A549 (cell line): ENCODE measurements at regions of chr16 and their contacts with region 1.

Region 1: DNA sequence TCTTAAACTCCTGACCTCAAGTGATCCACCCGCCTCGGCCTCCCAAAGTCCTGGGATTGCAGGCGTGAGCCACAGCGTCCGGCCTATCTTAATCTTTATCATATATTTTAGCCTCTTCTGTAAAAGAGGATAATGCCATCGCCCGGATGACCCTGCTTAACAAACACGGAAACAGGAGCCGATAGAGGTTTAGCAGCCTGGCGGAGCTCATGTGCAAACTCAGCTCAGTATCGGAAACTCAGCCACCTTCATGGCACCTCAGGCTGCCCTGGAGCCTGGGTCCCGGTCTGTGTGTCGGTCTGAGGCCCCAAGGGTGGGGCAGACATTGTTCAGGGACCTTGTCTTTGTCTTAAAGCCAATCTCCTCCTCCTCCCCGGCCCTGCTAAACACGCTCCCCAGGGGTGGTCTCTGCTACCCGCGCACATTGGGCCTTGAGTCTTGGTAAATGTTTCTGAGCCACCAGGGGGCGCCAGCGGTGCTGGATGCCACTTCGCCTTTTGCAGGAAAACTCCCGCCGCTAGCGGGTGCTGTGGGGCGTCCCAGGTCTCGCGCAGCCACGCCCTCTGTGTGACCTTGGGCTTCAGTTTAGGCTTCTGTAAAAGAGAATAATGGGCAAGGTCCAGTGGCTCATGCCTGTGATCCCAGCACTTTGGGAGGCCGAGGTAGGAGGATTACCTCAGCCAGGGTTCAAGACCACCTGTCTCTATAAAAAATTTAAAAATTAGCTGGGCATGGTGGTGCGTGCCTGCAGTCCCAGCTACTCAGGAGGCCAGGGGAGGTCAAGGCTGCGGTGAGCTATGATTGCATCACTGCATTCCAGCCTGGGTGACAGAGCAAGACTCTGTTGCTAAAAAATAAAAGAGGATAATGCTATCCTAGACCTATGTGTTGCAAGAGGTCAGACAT is 2.7 kb downstream of the CETP start:
- DNase-seq: peak; percentile 73 to 85
- ATAC-seq: peak; percentile 57 to 87; a peak in 4 of 6 replicates
- H3K4me3 ChIP-seq: no peak overlapping the region
- H3K27ac ChIP-seq: peak overlapping the region in 1 of 2 experiments; percentile 22; a peak in 1 of 6 replicates
- H3K4me1 ChIP-seq: peaks cover 3% of the 10 kb centered on the region; the same call in 1 of the 3 replicates
- CTCF ChIP-seq: peak; percentile 89
- EP300 ChIP-seq: no peak
- POLR2A ChIP-seq: no peak
- RAD21 ChIP-seq: peak; percentile 70 to 82

Region 2: GRCh38 chr16:56950881-56951771 is 13.4 kb before region 1 on chr16:
- CTCF ChIA-PET with region 1: interaction called, 38 read pairs
- POLR2A ChIA-PET with region 1: no interaction called
- DNase-seq: peak; percentile 60 to 65
- ATAC-seq: peak; percentile 76 to 93
- H3K4me3 ChIP-seq: no peak overlapping the region
- H3K27ac ChIP-seq: no peak overlapping the region
- H3K4me1 ChIP-seq: no peaks in the 10 kb centered on the region
- CTCF ChIP-seq: peak; percentile 58
- EP300 ChIP-seq: no peak
- POLR2A ChIP-seq: no peak
- RAD21 ChIP-seq: peak; percentile 64 to 73

Region 3: DNA sequence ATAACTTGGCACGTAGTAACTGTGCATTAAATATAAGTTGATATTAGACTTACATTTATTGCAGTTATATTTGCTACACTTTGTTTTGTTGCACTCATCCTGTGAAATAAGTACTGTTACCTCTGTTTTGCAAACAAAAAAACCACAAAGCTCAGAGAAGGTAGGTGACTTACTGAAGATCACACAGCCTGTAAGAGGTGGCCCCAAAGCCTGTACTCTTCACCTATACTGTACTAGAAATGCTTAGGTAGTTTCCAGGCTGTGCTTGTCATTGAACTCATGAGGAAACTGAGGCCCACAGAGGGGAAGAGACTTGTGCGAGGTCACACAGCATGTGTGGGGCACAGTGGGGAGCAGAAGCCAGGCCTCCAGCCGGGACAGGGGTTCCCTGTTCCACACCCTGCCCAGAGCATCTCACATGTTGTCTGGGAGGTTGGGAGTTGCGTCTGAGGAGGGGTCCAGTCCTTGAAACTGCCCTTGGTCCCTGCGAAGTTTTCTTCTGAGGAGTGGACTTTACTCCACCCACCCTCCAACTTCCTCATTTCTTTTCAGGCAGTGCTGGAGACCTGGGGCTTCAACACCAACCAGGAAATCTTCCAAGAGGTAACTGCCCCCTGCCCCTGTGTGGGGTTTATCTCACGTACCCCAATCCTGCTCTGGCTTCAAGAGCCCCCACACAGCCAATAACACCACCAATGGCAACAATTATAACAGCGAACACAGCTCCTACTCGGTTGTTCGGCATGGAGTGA is 10.2 kb after region 1 on chr16:
- CTCF ChIA-PET with region 1: interaction called, 16 read pairs
- POLR2A ChIA-PET with region 1: no interaction called
- DNase-seq: no peak
- ATAC-seq: no peak
- H3K4me3 ChIP-seq: no peak overlapping the region
- H3K27ac ChIP-seq: no peak overlapping the region
- H3K4me1 ChIP-seq: no peaks in the 10 kb centered on the region
- CTCF ChIP-seq: no peak
- EP300 ChIP-seq: no peak
- POLR2A ChIP-seq: no peak
- RAD21 ChIP-seq: no peak

Region 4: DNA sequence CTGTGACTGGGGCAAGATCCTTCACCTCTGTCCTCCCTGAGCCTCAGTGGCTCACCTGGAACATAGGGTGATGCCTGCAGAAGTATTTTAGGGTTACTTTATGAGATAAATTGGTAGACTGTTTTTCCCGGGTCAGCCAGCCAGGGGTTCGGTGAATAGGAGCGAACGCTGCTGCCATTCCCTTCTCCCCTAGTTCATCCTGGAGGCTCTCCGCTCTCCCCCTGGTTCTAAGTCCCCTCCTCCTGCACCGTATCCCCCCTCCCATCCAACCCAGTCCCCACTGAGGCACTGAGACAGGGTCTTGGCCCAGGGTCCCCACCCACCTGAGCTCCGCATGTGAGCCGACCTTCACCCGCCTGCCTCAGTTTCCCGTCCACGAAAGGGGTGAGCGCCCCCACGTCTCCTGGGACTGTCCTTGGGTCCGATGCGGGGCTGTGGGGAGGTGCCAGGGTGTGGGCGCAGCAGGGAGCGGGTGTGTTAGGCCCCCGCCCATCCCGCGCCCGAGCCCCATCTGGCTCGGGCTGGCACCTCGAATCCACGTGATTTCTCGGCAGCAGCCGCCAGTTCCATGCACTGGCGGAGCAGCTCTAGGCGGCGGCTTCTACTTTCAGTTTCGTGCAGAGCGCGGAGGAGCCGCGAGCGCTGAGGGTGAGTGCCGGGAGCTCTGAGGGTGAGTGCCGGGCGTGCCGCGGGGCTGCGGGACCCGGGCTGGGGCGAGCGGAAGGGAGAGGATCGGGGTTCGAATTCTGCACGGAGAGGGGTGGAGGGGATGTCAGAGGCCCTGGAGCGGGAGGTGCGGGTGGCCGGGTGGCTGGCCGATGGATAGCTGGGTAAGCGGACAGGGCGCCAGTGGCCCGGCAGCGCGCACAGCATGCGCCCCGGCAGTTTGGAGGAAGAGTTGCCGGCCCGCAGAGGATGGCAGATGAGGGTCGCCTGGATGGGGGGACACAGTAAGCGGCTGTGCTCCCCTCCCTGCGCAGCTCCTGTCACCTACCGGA is 24.8 kb after region 1 on chr16 and contains the start of gene NLRC5:
- CTCF ChIA-PET with region 1: interaction called, 23 read pairs
- POLR2A ChIA-PET with region 1: no interaction called
- DNase-seq: peak; percentile 62 to 86
- ATAC-seq: peak; percentile 76 to 88
- H3K4me3 ChIP-seq: peak within 1 kb of the TSS; percentile 56
- H3K27ac ChIP-seq: peak within 1 kb of the TSS; percentile 74 to 89
- H3K4me1 ChIP-seq: peaks cover 25% of the 10 kb centered on the region
- CTCF ChIP-seq: no peak
- EP300 ChIP-seq: no peak
- POLR2A ChIP-seq: no peak
- RAD21 ChIP-seq: no peak
- polyA plus RNA-seq, gene NLRC5: 2.5 and 2.6 TPM in 2 replicates

Region 5: GRCh38 chr16:57058387-57058786 is 93.9 kb after region 1 on chr16:
- CTCF ChIA-PET with region 1: no interaction called
- POLR2A ChIA-PET with region 1: no interaction called
- DNase-seq: no peak
- ATAC-seq: no peak
- H3K4me3 ChIP-seq: no peak overlapping the region
- H3K27ac ChIP-seq: no peak overlapping the region
- H3K4me1 ChIP-seq: no peaks in the 10 kb centered on the region
- CTCF ChIP-seq: no peak
- EP300 ChIP-seq: no peak
- POLR2A ChIP-seq: no peak
- RAD21 ChIP-seq: no peak